Endothelial cell of umbilical vein (primary cell): ENCODE measurements at regions of chr5 and their contacts with region 1.

Region 1: DNA sequence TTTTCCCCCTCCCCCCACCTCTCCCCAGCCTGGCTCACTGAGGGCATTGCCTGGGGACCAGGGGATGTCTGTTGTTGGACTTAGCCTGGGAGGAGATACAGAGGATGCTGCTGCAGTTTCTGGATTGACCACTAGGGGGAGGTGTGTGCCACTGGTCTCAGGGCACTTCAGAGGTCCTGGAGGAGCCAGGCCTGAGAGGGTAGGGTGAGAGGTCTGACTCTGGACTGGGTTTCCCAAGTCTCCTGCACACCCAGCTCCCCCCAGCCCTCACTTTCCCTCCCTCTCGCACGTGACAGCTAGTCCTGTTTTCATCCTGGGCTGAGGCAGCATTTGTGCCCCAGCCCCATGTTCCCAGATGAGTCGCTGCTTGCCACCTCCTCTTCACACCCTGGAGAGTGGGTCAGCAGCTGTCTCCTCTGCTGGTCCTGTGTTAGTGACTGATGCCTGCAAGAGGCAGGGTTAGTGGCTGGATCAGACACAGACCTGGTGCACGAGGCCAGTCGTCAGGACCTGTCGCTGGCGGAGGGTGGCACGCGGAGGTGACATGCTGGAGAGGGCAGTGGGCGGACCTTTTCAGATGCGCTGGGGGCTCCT is 4.4 kb downstream of the IL3 start:
- DNase-seq: peak; percentile 78
- H3K4me3 ChIP-seq: no peak overlapping the region
- H3K27ac ChIP-seq: no peak overlapping the region
- H3K4me1 ChIP-seq: no peaks in the 10 kb centered on the region
- H3K27me3 ChIP-seq: no peaks in the 10 kb centered on the region
- CTCF ChIP-seq: peak; percentile 93 to 97
- POLR2A ChIP-seq: no peak

Region 2: DNA sequence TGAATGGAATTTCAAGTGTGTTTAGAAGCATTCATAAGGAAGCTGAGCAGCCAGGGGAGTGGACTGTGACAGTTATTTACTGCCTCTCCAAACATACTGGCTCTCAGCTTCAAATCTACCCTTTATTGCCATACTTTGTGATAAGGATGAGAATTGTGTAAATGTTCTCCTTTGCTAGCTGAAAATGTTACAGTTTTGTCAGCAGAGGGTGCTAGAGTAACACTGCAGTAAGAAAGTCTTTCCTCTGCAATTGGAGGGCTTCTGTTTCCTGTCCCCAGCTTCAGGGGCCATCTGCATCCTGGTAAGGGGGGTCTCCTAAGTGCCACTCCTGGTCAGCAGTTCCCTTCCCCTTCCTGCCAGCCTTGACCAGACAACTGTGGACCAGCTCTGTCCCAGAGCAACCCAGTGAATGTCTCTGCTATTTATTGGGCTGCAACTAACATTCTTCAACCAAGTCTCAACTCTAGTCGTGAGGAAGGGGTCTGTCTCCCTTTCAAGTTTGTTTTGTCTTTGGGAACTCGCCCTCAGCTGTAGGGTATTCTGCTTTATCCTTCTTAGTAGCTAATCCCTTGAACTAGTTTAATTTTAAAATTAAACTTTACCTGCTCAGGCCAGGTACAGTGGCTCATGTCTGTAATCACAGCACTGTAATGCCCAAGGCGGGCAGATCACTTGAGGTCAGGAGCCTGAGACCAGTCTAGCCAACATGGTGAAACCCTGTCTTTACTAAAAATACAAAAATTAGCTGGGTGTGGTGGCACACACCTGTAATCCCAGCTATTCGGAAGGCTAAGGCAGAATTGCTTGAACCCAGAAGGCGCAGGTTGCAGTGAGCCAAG is 475.1 kb before region 1 on chr5:
- CTCF ChIA-PET with region 1: interaction called, 37 read pairs
- POLR2A ChIA-PET with region 1: no interaction called
- dilution Hi-C with region 1: no loop called
- intact Hi-C with region 1: loop called (anchors 1 kb)
- DNase-seq: peak; percentile 73
- H3K4me3 ChIP-seq: no peak overlapping the region
- H3K27ac ChIP-seq: no peak overlapping the region
- H3K4me1 ChIP-seq: no peaks in the 10 kb centered on the region
- H3K27me3 ChIP-seq: no peaks in the 10 kb centered on the region
- CTCF ChIP-seq: peak; percentile 65 to 76
- POLR2A ChIP-seq: no peak

Region 3: DNA sequence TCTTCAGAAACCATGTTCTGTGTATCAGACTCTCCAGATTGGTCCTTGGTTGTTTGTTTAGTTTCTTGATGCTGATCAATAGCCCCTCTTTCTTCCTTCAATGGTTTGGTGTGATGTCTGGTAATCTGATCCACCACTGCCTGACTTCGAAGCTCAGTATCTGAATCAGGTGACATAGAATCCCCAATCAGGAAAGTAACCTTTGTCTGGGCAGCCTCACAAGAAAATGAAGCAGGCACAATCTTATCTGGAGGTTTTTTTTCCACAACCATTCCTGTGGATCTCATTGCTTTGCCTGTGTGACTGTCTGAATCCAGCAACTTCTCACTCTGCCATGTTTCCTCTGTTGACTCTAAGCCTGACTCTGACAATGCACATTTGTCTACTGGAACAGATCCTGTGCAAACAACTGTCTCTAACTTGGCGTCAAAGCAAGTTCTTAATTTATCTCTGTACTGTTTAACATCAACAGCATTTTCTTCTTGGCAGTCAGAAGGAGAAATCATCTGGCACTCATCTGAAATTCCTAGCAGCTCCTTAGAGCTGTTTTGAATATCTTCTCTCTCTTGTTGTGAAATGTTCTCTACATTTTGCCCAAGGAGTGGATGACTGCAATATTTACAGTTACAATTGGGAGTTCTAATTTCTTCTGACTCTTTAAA is 392.7 kb before region 1 on chr5:
- CTCF ChIA-PET with region 1: no interaction called
- POLR2A ChIA-PET with region 1: no interaction called
- dilution Hi-C with region 1: no loop called
- intact Hi-C with region 1: no loop called
- DNase-seq: peak; percentile 41
- H3K4me3 ChIP-seq: no peak overlapping the region
- H3K27ac ChIP-seq: no peak overlapping the region
- H3K4me1 ChIP-seq: no peaks in the 10 kb centered on the region
- H3K27me3 ChIP-seq: no peaks in the 10 kb centered on the region
- CTCF ChIP-seq: no peak
- POLR2A ChIP-seq: no peak

Region 4: GRCh38 chr5:132103332-132103951 is 38.6 kb after region 1 on chr5:
- CTCF ChIA-PET with region 1: interaction called, 3 read pairs
- POLR2A ChIA-PET with region 1: no interaction called
- dilution Hi-C with region 1: no loop called
- intact Hi-C with region 1: loop called (anchors 1 kb)
- DNase-seq: peak; percentile 95
- H3K4me3 ChIP-seq: no peak overlapping the region
- H3K27ac ChIP-seq: peak overlapping the region; percentile 78
- H3K4me1 ChIP-seq: peaks cover 17% of the 10 kb centered on the region
- H3K27me3 ChIP-seq: peaks cover 0 to 4% of the 10 kb centered on the region in 2 experiments
- CTCF ChIP-seq: no peak
- POLR2A ChIP-seq: no peak

Region 5: DNA sequence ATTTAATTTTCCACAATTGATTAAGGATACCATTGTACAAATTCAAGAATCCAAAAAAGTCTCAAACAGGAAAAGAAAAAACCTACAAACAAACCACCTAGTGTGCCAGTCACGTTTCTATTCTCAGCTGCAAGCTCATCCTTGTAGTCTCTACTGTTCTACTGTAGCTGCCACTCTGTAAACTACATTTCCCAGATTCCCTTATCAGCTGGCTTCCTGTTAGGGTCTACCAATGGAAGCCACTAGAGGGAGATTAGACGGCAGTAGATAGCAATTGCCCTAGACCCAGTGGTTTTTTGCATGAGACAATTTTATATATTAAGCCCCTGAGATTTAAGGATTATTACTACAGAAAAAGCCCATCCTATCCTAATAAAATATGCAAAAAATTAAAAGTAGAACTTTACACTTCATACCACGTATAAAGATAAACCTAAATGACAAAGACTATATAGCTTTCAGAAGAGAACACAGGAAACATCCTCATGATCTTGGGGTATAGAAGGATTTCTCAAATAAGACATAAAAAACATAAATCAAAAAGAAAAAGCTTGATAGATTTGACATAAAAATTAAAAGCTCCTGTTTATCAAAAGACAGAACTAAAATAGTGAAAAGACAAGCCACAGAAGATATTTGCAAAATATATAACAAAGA is 125.5 kb after region 1 on chr5:
- CTCF ChIA-PET with region 1: interaction called, 9 read pairs
- POLR2A ChIA-PET with region 1: no interaction called
- dilution Hi-C with region 1: no loop called
- intact Hi-C with region 1: loop called (anchors 1 kb)
- DNase-seq: peak; percentile 78
- H3K4me3 ChIP-seq: no peak overlapping the region
- H3K27ac ChIP-seq: no peak overlapping the region
- H3K4me1 ChIP-seq: no peaks in the 10 kb centered on the region
- H3K27me3 ChIP-seq: no peaks in the 10 kb centered on the region
- CTCF ChIP-seq: peak; percentile 75 to 76
- POLR2A ChIP-seq: no peak

Region 6: GRCh38 chr5:132260714-132261551 is 196.1 kb after region 1 on chr5:
- CTCF ChIA-PET with region 1: interaction called, 5 read pairs
- POLR2A ChIA-PET with region 1: no interaction called
- dilution Hi-C with region 1: no loop called
- intact Hi-C with region 1: loop called (anchors 2 kb)
- DNase-seq: peak; percentile 91
- H3K4me3 ChIP-seq: no peak overlapping the region
- H3K27ac ChIP-seq: peak overlapping the region; percentile 96
- H3K4me1 ChIP-seq: peaks cover 76% of the 10 kb centered on the region
- H3K27me3 ChIP-seq: no peaks in the 10 kb centered on the region
- CTCF ChIP-seq: no peak
- POLR2A ChIP-seq: no peak

Region 7: DNA sequence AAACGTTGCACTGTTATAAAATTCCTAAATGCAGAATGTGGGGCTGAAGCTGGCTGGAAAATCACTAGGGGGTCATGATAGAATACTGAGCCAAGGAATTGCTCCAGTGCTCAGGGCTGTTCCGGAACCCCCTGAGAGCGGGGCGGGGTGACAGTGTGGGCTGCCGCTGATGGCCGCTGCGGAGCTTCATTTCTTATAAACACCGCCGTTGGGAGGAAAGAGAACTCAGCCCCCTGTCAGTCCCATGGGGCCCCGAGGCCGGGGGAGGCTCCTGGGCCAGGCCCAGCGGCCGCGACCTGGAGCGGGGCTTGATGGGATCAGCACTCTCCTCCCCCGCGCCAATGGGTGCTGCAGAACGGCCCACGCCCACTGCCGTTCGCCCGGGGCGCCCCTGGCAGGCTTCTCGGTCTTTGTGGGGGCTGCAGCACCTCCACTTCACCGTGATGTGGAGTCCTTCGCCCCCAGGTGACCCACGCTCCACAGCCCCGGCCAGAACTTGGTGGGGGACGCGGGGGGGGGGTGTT is 430.9 kb after region 1 on chr5:
- CTCF ChIA-PET with region 1: no interaction called
- POLR2A ChIA-PET with region 1: no interaction called
- dilution Hi-C with region 1: no loop called
- intact Hi-C with region 1: loop called (anchors 5 kb)
- DNase-seq: peak; percentile 50
- H3K4me3 ChIP-seq: peak overlapping the region; percentile 11 to 39 (median 30)
- H3K27ac ChIP-seq: peak overlapping the region; percentile 56
- H3K4me1 ChIP-seq: peaks cover 30% of the 10 kb centered on the region
- H3K27me3 ChIP-seq: no peaks in the 10 kb centered on the region
- CTCF ChIP-seq: no peak
- POLR2A ChIP-seq: peak; percentile 50